ENCODE measurements at regions of chr3 and their contacts with region 1.

Region 1: GRCh38 chr3:112531358-112531781 is 30.4 kb downstream of the ATG3 start:
- DNase-seq: no peak

Region 2: DNA sequence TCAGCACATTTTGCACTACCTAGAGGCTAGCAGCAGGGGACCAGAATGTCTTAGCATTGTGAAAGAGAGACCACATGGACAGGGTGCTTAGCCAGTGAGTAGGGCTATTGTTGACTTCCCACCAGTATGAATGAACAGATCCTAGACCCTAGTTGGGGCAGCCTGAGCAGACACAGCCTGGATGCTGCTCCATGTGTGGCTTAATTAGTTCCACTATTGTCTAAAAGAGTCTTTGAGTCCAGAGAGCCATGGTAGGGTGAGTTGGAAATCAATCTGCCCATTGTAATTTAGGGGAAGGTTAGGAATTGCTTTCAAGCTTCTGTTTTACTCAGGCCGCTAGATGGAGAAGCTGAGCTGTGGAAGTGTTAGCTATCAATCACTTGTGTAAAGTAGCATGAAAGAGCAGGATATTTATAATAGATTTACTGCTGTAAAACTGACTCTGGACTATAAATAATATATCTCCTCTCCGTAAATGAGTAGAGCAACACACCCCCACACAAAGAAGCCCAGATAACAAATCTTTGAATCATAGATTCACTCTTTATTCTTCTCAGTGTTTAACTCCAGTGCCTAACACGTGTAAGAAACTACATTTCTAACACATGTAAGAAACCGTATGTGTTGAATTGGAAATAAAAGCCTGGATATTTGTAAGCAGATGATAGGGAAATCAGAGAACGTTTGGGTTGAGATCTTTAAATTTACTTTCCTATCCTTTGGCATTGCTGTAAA is 394.2 kb before region 1 on chr3:
- intact Hi-C with region 1: loop called (anchors 5 kb)
- DNase-seq: peak in 5 of 10 donors; percentile 8 to 51 (median 34)

Measured in posterior cingulate gyrus (tissue), 11 donors.